T-cell (primary cell): ENCODE measurements at regions of chr11 and their contacts with region 1.

Region 1: DNA sequence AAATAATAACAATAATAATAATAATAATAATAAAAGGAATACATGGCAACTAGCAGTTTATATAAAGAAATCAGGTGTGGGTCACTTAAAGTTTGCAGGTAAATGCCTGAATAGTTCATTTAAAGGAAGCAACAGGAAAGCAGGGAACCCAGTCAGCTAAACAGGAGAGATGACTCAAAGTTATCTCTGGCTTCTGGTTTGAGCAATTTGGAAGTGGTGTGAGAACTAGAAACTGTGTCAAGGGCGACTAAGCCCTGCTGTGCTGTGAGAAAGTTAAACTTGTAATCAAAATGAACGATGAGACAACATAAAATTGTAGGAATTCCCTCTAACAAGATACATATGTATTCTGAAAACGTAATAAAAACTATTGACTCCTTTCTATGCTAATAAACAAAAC is 35.5 kb downstream of the SLC22A9 start:
- DNase-seq: no peak
- ATAC-seq: no peak
- H3K4me3 ChIP-seq: no peak overlapping the region
- H3K4me3 Mint-ChIP-seq: no peak overlapping the region
- H3K27ac ChIP-seq: no peak overlapping the region
- H3K27ac Mint-ChIP-seq: no peak overlapping the region
- H3K4me1 ChIP-seq: no peaks in the 10 kb centered on the region
- H3K4me1 Mint-ChIP-seq: no peaks in the 10 kb centered on the region
- H3K27me3 ChIP-seq: no peaks in the 10 kb centered on the region
- H3K27me3 Mint-ChIP-seq: peaks cover 21% of the 10 kb centered on the region in 2 donors

Region 2: GRCh38 chr11:63427971-63428508 is 22.9 kb after region 1 on chr11:
- CTCF ChIA-PET with region 1: no interaction called
- POLR2A ChIA-PET with region 1: no interaction called
- DNase-seq: no peak
- ATAC-seq: no peak
- H3K4me3 ChIP-seq: no peak overlapping the region
- H3K4me3 Mint-ChIP-seq: no peak overlapping the region
- H3K27ac ChIP-seq: no peak overlapping the region
- H3K27ac Mint-ChIP-seq: no peak overlapping the region
- H3K4me1 ChIP-seq: no peaks in the 10 kb centered on the region
- H3K4me1 Mint-ChIP-seq: no peaks in the 10 kb centered on the region
- H3K27me3 ChIP-seq: peaks cover 0 to 12% of the 10 kb centered on the region in 2 experiments
- H3K27me3 Mint-ChIP-seq: peaks cover 15 to 29% of the 10 kb centered on the region in 2 donors

Region 3: DNA sequence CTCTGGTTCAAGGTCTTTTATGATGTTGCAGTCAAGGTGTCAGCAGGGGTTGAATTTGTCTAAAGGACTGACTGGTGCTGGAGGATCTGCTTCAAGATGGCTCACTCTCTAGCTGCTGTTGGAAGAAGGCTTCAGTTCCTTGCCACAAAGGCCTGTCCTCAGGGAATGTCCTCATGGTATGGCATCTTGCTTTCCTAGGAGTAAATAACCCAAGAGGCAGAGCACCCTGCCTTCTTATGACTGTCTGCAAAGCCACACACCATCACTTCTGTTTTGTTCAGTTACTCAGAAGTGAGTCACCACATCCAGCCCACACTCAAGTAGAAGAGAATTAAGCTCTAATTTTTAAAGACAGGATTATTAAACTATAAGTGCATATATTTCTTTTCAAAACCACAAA is 40.6 kb after region 1 on chr11:
- CTCF ChIA-PET with region 1: no interaction called
- POLR2A ChIA-PET with region 1: interaction called in 1 of 2 experiments, 15 read pairs
- DNase-seq: no peak
- ATAC-seq: no peak
- H3K4me3 ChIP-seq: no peak overlapping the region
- H3K4me3 Mint-ChIP-seq: no peak overlapping the region
- H3K27ac ChIP-seq: no peak overlapping the region
- H3K27ac Mint-ChIP-seq: no peak overlapping the region
- H3K4me1 ChIP-seq: no peaks in the 10 kb centered on the region
- H3K4me1 Mint-ChIP-seq: peaks cover 13 to 29% (median 20%) of the 10 kb centered on the region in 3 donors
- H3K27me3 ChIP-seq: peaks cover 2% of the 10 kb centered on the region in 2 experiments
- H3K27me3 Mint-ChIP-seq: peaks cover 2 to 3% of the 10 kb centered on the region in 2 donors

Region 4: GRCh38 chr11:63826471-63827190 is 421.5 kb after region 1 on chr11:
- CTCF ChIA-PET with region 1: no interaction called
- POLR2A ChIA-PET with region 1: no interaction called
- DNase-seq: no peak
- ATAC-seq: no peak
- H3K4me3 ChIP-seq: no peak overlapping the region
- H3K4me3 Mint-ChIP-seq: no peak overlapping the region
- H3K27ac ChIP-seq: no peak overlapping the region
- H3K27ac Mint-ChIP-seq: no peak overlapping the region
- H3K4me1 ChIP-seq: no peaks in the 10 kb centered on the region
- H3K4me1 Mint-ChIP-seq: no peaks in the 10 kb centered on the region
- H3K27me3 ChIP-seq: no peaks in the 10 kb centered on the region
- H3K27me3 Mint-ChIP-seq: no peaks in the 10 kb centered on the region